MCF 10A (cell line): ENCODE measurements at regions of chr12 and their contacts with region 1.

Region 1: GRCh38 chr12:14239350-14239934 is 126.0 kb upstream of the ATF7IP start:
- DNase-seq: no peak
- H3K4me3 Mint-ChIP-seq: no peak overlapping the region
- H3K27ac Mint-ChIP-seq: no peak overlapping the region
- H3K4me1 Mint-ChIP-seq: peaks cover 11% of the 10 kb centered on the region
- H3K27me3 Mint-ChIP-seq: no peaks in the 10 kb centered on the region
- CTCF ChIP-seq: no peak

Region 2: GRCh38 chr12:14111230-14111865 is 128.1 kb before region 1 on chr12:
- CTCF ChIA-PET with region 1: no interaction called
- POLR2A ChIA-PET with region 1: no interaction called
- intact Hi-C with region 1: no loop called
- DNase-seq: peak; percentile 12
- H3K4me3 Mint-ChIP-seq: no peak overlapping the region
- H3K27ac Mint-ChIP-seq: no peak overlapping the region
- H3K4me1 Mint-ChIP-seq: no peaks in the 10 kb centered on the region
- H3K27me3 Mint-ChIP-seq: no peaks in the 10 kb centered on the region
- CTCF ChIP-seq: no peak

Region 3: GRCh38 chr12:14199455-14200198 is 39.8 kb before region 1 on chr12:
- CTCF ChIA-PET with region 1: no interaction called
- POLR2A ChIA-PET with region 1: no interaction called
- intact Hi-C with region 1: no loop called
- DNase-seq: no peak
- H3K4me3 Mint-ChIP-seq: no peak overlapping the region
- H3K27ac Mint-ChIP-seq: no peak overlapping the region
- H3K4me1 Mint-ChIP-seq: no peaks in the 10 kb centered on the region
- H3K27me3 Mint-ChIP-seq: no peaks in the 10 kb centered on the region
- CTCF ChIP-seq: no peak

Region 4: DNA sequence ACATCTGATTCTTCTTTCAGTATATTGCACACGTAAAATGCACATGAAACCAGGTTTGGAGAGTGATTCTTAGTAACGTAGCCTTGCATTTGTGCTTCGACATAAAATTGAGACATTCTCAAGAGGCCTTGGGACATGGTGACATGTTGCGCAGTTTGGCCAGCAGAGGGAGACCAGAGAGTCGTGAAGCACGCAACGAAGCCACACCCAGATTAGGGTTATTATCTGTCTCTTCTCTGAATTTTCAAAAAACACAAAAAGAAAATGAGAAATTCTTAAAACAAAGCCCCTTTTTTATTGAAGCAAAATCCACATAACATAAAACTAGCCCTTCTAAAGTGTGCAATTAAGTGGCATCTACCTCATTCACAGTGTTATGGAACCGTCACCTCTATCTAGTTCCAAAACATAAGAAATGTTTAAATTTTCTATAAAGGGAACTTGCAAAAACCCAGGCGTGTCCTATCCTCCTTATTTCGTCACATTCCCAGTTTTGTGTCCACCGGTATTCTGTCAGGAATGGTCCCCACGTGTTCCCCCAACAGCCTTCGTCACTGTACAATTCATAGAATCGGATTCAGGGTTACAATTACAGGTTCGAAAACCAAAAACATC is 17.2 kb after region 1 on chr12:
- CTCF ChIA-PET with region 1: interaction called, 21 read pairs
- POLR2A ChIA-PET with region 1: interaction called, 4 read pairs
- intact Hi-C with region 1: no loop called
- DNase-seq: peak; percentile 80
- H3K4me3 Mint-ChIP-seq: no peak overlapping the region
- H3K27ac Mint-ChIP-seq: peak overlapping the region; percentile 85
- H3K4me1 Mint-ChIP-seq: peaks cover 20% of the 10 kb centered on the region
- H3K27me3 Mint-ChIP-seq: no peaks in the 10 kb centered on the region
- CTCF ChIP-seq: peak; percentile 30

Region 5: GRCh38 chr12:14454098-14454907 is 214.9 kb after region 1 on chr12:
- CTCF ChIA-PET with region 1: interaction called, 11 read pairs
- POLR2A ChIA-PET with region 1: no interaction called
- intact Hi-C with region 1: loop called (anchors 2 kb)
- DNase-seq: peak; percentile 55
- H3K4me3 Mint-ChIP-seq: no peak overlapping the region
- H3K27ac Mint-ChIP-seq: no peak overlapping the region
- H3K4me1 Mint-ChIP-seq: peaks cover 7% of the 10 kb centered on the region
- H3K27me3 Mint-ChIP-seq: no peaks in the 10 kb centered on the region
- CTCF ChIP-seq: peak; percentile 38

Region 6: DNA sequence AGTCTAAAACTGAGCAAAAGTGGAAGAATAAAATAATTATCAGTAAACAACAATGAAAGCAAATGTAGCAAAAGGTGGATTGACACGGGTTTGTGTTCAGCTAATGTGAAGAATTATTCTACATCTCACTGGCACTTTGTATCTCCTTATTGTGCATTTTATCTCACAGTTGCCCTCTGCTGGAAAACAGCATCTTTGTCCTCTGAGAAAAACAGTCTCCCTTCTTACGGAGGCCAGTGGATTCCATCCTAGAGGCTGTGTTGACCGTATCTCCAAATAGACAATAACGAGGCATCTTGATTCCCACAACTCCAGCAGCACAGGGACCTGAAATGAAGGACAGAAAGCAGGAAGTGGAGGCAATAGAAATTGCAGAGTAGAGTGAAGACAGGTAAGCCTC is 379.5 kb after region 1 on chr12:
- CTCF ChIA-PET with region 1: interaction called, 43 read pairs
- POLR2A ChIA-PET with region 1: interaction called, 3 read pairs
- intact Hi-C with region 1: loop called (anchors 1 kb)
- DNase-seq: peak; percentile 48
- H3K4me3 Mint-ChIP-seq: no peak overlapping the region
- H3K27ac Mint-ChIP-seq: no peak overlapping the region
- H3K4me1 Mint-ChIP-seq: peaks cover 8% of the 10 kb centered on the region
- H3K27me3 Mint-ChIP-seq: no peaks in the 10 kb centered on the region
- CTCF ChIP-seq: peak; percentile 33

Region 7: DNA sequence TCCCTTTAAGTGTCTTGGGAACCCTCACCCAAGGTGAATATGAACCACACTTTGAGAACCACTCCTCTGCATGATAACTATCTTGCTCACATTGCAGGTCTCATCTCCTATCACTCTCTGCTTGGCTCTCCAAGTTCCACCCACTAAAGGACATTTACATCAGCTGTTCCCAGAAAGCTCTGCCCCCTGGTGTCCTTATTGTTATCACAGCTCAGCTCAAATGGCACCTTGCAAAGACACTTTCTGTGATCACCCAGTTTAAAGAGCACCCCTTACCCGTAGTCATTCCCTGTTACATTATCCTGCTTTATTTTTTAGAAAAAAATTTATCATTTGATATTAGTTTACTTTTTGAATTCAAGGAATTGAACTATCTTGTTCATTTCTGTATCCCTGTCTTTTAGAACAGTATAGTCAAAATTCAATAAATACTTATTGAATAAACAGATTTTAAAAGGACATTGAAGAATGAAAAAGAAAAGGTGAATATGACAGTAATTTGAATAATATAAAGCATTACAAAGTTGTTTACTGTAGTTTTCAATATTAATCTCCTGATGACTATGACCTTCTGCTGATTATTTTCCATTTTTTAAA is 477.5 kb after region 1 on chr12:
- CTCF ChIA-PET with region 1: interaction called, 3 read pairs
- POLR2A ChIA-PET with region 1: no interaction called
- intact Hi-C with region 1: loop called (anchors 1 kb)
- DNase-seq: peak; percentile 60
- H3K4me3 Mint-ChIP-seq: no peak overlapping the region
- H3K27ac Mint-ChIP-seq: no peak overlapping the region
- H3K4me1 Mint-ChIP-seq: no peaks in the 10 kb centered on the region
- H3K27me3 Mint-ChIP-seq: no peaks in the 10 kb centered on the region
- CTCF ChIP-seq: peak; percentile 37